ENCODE measurements at regions of chr5 and their contacts with region 1.

Region 1: DNA sequence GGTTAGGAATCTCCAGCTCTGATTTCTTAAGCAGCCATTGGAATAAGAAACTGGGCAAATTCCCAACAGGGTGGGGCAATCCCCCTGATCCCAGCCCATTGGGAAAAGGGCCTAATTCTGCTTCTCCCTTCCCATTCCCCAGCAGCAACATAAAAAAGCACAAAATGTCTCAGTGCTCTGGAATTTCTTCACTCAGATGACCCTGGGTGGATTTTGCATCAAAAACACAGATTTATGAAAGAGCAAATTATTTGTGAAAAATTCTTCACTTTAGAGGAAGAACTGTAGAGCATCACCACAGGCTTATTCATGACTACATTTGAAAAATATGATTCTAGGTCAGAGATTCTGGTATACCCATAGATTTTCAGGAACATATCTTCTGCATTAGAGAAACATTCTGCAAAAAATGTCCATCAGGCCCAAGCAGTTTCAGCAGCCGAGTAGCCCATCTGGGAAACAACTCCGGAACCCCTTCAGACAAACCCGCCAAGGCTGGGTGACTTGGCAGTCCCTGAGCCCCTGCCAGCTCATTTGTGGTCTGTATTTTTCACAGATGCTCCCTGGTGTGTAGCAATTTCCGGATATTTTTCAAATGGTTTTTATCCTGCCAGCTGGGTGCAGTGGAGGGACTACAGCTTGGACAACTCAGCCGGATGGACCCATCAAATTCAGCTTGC is 102.1 kb upstream of the RANBP3L start:
- DNase-seq: peak; percentile 48 to 78 (median 59)
- H3K4me3 ChIP-seq: no peak overlapping the region
- H3K27ac ChIP-seq: peak overlapping the region in 1 of 2 donors; percentile 8
- H3K4me1 ChIP-seq: peaks cover 4% of the 10 kb centered on the region
- H3K27me3 ChIP-seq: no peaks in the 10 kb centered on the region
- CTCF ChIP-seq: no peak
- EP300 ChIP-seq: no peak
- POLR2A ChIP-seq: no peak

Region 2: GRCh38 chr5:36264202-36264760 is 139.5 kb before region 1 on chr5:
- intact Hi-C with region 1: loop called in 2 of 4 experiments (anchors 10 kb)
- DNase-seq: no peak
- H3K4me3 ChIP-seq: no peak overlapping the region
- H3K27ac ChIP-seq: no peak overlapping the region
- H3K4me1 ChIP-seq: no peaks in the 10 kb centered on the region
- H3K27me3 ChIP-seq: no peaks in the 10 kb centered on the region
- CTCF ChIP-seq: no peak
- EP300 ChIP-seq: no peak
- POLR2A ChIP-seq: no peak

Region 3: DNA sequence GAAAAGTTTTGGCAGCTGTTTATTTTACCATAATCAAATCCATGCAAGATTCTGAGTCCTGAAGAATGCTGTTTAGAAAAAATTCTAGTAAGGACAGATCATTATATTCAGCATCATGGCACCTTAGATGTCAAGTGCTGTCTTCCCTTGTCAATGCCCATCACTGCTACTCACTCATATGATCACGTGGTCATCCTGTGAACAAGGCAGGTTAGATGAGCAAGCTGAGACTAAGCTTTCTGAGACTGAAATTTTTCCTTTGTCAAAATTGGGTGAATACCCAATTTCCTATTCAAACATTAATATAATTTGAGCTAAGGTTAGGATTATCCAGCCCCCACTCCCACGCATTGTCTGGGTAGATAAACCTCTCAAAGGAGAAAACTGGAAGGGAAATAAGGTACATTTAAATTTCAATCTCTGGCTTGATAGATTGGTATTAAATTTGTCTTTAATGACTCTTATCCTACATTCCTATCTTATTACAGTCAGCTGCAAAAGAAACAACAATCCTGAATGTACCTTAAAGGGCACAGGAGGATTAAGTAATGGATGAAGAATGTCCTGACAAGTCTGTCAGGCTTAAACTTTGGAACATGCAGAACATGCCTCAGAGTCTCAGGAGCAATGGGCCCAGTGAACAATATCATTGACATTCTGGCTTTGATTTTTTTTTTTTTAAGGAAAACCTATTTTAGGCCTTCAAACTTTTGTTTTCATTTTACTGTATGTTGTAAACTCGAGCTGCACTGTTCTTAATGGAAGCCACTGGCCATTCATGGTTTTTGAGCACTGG is 46.7 kb after region 1 on chr5:
- intact Hi-C with region 1: no loop called
- DNase-seq: no peak
- H3K4me3 ChIP-seq: no peak overlapping the region
- H3K27ac ChIP-seq: no peak overlapping the region
- H3K4me1 ChIP-seq: no peaks in the 10 kb centered on the region
- H3K27me3 ChIP-seq: no peaks in the 10 kb centered on the region
- CTCF ChIP-seq: no peak
- EP300 ChIP-seq: no peak
- POLR2A ChIP-seq: no peak

Region 4: GRCh38 chr5:36507332-36507952 is 103.7 kb after region 1 on chr5:
- intact Hi-C with region 1: loop called in 1 of 4 experiments (anchors 10 kb)
- DNase-seq: peak; percentile 22 to 67 (median 54)
- H3K4me3 ChIP-seq: no peak overlapping the region
- H3K27ac ChIP-seq: no peak overlapping the region
- H3K4me1 ChIP-seq: no peaks in the 10 kb centered on the region
- H3K27me3 ChIP-seq: no peaks in the 10 kb centered on the region
- CTCF ChIP-seq: peak in 1 of 3 donors; percentile 17
- EP300 ChIP-seq: no peak
- POLR2A ChIP-seq: no peak

Measured in ovary (tissue), 10 donors.